Natural killer cell (primary cell): ENCODE measurements at regions of chr1 and their contacts with region 1.

Region 1: DNA sequence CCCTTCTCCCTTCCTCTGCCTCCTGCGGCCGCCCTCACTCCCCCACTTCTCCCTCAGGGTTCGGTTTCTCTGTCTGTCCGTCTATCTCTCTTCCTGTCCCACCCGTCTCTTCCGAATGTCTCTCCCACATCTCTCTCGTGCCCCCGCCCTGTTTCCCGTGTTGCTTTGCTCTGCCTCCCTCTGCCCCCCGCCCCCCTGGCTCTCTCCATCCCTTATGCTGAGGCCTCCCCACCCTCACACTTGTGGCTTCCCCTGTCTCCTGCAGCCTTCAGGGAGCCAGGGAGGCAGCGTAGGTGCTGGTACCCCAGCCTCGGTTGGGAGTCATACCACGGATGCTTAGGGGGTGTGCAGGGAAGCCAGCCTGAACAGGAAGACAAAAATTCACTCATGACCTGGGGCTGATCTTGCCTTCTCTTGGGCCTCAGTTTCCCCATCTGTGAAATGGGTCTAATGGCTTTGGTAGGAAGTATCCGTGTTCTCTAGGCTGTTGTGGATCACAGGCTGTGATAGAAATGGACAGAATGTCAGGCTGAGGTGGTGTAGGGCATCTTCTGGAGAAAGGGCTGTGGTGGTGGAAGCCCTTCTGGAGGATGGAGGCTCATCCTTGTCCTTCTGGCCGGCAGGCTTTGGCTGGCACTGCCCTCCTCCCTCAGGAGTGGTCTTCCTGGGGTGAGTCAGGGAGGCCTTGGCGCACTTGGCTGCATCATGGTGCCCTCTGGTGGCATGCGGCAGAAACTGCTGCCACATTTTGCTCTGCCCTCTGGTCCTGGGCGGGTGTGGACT is 55.5 kb downstream of the FOXO6 start:
- DNase-seq: peak; percentile 65 to 82
- ATAC-seq: peak; percentile 56 to 96 (median 88)
- H3K4me3 ChIP-seq: no peak overlapping the region
- H3K4me3 Mint-ChIP-seq: no peak overlapping the region
- H3K27ac ChIP-seq: no peak overlapping the region
- H3K27ac Mint-ChIP-seq: no peak overlapping the region
- H3K4me1 ChIP-seq: no peaks in the 10 kb centered on the region
- H3K4me1 Mint-ChIP-seq: peaks cover 0 to 11% of the 10 kb centered on the region in 2 donors
- H3K27me3 ChIP-seq: no peaks in the 10 kb centered on the region
- H3K27me3 Mint-ChIP-seq: peaks cover 0 to 9% of the 10 kb centered on the region in 2 donors
- CTCF ChIP-seq: peak; percentile 93

Region 2: GRCh38 chr1:41268154-41268770 is 148.5 kb before region 1 on chr1:
- intact Hi-C with region 1: loop called (anchors 1 kb)
- DNase-seq: peak; percentile 65 to 79
- ATAC-seq: peak; percentile 70 to 85 (median 83)
- H3K4me3 ChIP-seq: no peak overlapping the region
- H3K4me3 Mint-ChIP-seq: no peak overlapping the region
- H3K27ac ChIP-seq: no peak overlapping the region
- H3K27ac Mint-ChIP-seq: no peak overlapping the region
- H3K4me1 ChIP-seq: peaks cover 3% of the 10 kb centered on the region
- H3K4me1 Mint-ChIP-seq: peaks cover 0 to 9% of the 10 kb centered on the region in 2 donors
- H3K27me3 ChIP-seq: no peaks in the 10 kb centered on the region
- H3K27me3 Mint-ChIP-seq: peaks cover 0 to 5% of the 10 kb centered on the region in 2 donors
- CTCF ChIP-seq: peak; percentile 99

Region 3: DNA sequence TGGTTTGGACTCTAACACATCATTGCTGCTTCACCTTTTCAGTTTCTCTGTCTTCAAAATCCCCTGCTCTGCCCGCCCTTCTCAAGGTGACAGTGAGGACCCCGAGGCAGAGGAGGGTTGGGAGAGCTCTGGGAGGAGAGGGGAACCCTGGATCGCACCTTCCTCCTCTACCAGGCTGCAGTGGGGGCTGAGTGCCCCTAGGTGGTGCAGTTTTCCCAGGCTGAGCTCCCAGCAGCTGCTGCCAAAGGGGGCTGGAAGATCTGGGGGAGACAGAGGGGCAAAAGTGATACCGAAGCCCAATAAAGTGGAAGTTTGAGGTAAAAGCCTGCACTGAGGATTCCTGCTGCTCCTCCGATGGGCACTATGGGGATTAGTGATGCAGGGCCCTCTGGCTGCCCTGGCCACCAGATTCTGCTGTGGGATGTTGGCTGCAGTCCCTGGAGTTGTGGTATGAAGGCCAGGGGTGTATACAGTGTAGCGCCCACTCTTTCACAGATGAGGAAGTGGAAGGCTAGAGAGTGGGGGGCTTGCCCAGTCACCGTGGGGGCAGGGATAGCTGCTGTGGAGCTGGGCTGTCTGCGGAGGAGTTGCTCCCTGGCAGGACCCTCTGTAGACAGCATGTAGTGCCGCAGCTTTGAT is 133.9 kb before region 1 on chr1:
- intact Hi-C with region 1: loop called (anchors 1 kb)
- DNase-seq: peak; percentile 46 to 50
- ATAC-seq: peak; percentile 64 to 91 (median 82)
- H3K4me3 ChIP-seq: no peak overlapping the region
- H3K4me3 Mint-ChIP-seq: no peak overlapping the region
- H3K27ac ChIP-seq: no peak overlapping the region
- H3K27ac Mint-ChIP-seq: no peak overlapping the region
- H3K4me1 ChIP-seq: peaks cover 20% of the 10 kb centered on the region
- H3K4me1 Mint-ChIP-seq: peaks cover 19 to 30% of the 10 kb centered on the region in 2 donors
- H3K27me3 ChIP-seq: no peaks in the 10 kb centered on the region
- H3K27me3 Mint-ChIP-seq: peaks cover 0 to 12% of the 10 kb centered on the region in 2 donors
- CTCF ChIP-seq: peak; percentile 91

Region 4: GRCh38 chr1:41322835-41323627 is 93.7 kb before region 1 on chr1:
- intact Hi-C with region 1: loop called (anchors 1 kb)
- DNase-seq: peak in 1 of 2 donors; percentile 46
- ATAC-seq: peak; percentile 41 to 81 (median 66)
- H3K4me3 ChIP-seq: no peak overlapping the region
- H3K4me3 Mint-ChIP-seq: no peak overlapping the region
- H3K27ac ChIP-seq: no peak overlapping the region
- H3K27ac Mint-ChIP-seq: no peak overlapping the region
- H3K4me1 ChIP-seq: peaks cover 12% of the 10 kb centered on the region
- H3K4me1 Mint-ChIP-seq: peaks cover 8 to 18% of the 10 kb centered on the region in 2 donors
- H3K27me3 ChIP-seq: no peaks in the 10 kb centered on the region
- H3K27me3 Mint-ChIP-seq: peaks cover 0 to 10% of the 10 kb centered on the region in 2 donors
- CTCF ChIP-seq: no peak